ENCODE measurements at regions of chr3 and their contacts with region 1.

Region 1: GRCh38 chr3:187822402-187822801 is 77.1 kb upstream of the BCL6 start:
- DNase-seq: no peak

Region 2: DNA sequence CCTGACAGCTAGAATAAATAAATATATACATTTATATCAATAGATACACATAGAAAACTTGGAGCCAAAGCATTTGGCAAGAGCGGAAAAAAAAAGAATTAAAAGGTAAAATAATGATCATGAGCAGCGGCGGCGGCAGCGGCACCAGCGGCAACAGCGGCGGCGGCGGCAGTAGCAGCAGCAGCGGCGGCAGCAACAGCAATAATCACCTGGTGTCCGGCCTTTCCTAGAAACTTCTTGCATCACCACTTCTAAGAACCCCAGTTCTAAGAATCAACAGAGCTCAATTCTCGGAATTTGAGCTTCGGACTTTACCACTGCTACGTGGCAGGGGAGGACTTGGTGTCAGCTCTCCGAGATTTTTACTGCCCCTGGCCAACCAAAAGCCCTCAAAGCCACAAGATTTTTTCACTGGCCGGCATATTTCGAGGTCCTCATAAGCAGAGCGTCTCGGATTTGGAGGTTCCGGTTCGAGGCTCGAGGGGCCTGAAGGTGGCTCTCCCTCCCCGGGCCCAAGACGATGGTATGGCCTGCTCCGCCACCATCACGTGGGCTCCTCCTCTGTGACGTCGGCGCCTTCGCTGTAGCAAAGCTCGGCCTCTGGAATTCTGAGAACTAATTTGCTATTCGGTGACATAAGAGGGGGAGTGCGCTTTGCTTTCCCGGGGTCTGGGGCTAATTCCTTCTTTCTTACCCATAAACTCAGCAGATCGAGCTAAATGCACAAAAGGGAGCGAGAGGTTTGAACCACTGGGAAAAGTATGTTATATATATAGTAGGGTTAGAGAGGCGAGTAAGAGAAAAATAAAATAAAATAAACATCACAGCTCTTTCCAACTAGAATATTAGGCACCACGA is 77.0 kb before region 1 on chr3 and contains the start of gene BCL6:
- in situ Hi-C with region 1: loop called (anchors 5 kb)
- DNase-seq: peak; percentile 96
- total RNA-seq, gene BCL6: 1.8 and 3.0 TPM in 2 replicates